CD8-positive, alpha-beta T cell (primary cell): ENCODE measurements at regions of chr18 and their contacts with region 1.

Region 1: GRCh38 chr18:79964330-79965118 is at the start of gene HSBP1L1:
- DNase-seq: peak; percentile 38 to 82 (median 68)
- ATAC-seq: peak; percentile 72
- H3K4me3 ChIP-seq: peak within 1 kb of the TSS; percentile 61 to 67
- H3K4me3 Mint-ChIP-seq: peak within 1 kb of the TSS; percentile 86
- H3K27ac ChIP-seq: peak within 1 kb of the TSS; percentile 56 to 67
- H3K27ac Mint-ChIP-seq: peak within 1 kb of the TSS; percentile 92
- H3K4me1 ChIP-seq: peaks cover 32% of the 10 kb centered on the region
- H3K4me1 Mint-ChIP-seq: peaks cover 25% of the 10 kb centered on the region
- H3K27me3 ChIP-seq: no peaks in the 10 kb centered on the region
- H3K27me3 Mint-ChIP-seq: peaks cover 4% of the 10 kb centered on the region
- CTCF ChIP-seq: no peak
- total RNA-seq, gene HSBP1L1: 19.0 to 20.4 TPM

Region 2: GRCh38 chr18:79988451-79989194 is 24.1 kb after region 1 on chr18 and contains the start of gene TXNL4A:
- CTCF ChIA-PET with region 1: interaction called, 3 read pairs
- POLR2A ChIA-PET with region 1: interaction called, 5 read pairs
- intact Hi-C with region 1: loop called (anchors 1 to 2 kb)
- DNase-seq: peak; percentile 67 to 95 (median 83)
- ATAC-seq: peak; percentile 95
- H3K4me3 ChIP-seq: peak within 1 kb of the TSS; percentile 74 to 97
- H3K4me3 Mint-ChIP-seq: peak within 1 kb of the TSS; percentile 90
- H3K27ac ChIP-seq: peak within 1 kb of the TSS; percentile 91 to 98
- H3K27ac Mint-ChIP-seq: peak within 1 kb of the TSS; percentile 96
- H3K4me1 ChIP-seq: peaks cover 40% of the 10 kb centered on the region
- H3K4me1 Mint-ChIP-seq: peaks cover 43% of the 10 kb centered on the region
- H3K27me3 ChIP-seq: no peaks in the 10 kb centered on the region
- H3K27me3 Mint-ChIP-seq: no peaks in the 10 kb centered on the region
- CTCF ChIP-seq: no peak
- total RNA-seq, gene TXNL4A: 62.0 to 69.0 TPM